Heart left ventricle (tissue), 16 donors: ENCODE measurements at regions of chr10 and their contacts with region 1.

Region 1: GRCh38 chr10:70903262-70903921 is 15.0 kb upstream of the PCBD1 start:
- DNase-seq: peak in 4 of 5 donors; percentile 68 to 79 (median 70)
- ATAC-seq: peak; percentile 61 to 72 (median 64)
- H3K4me3 ChIP-seq: no peak overlapping the region
- H3K27ac ChIP-seq: no peak overlapping the region
- H3K4me1 ChIP-seq: peaks cover 0 to 24% (median 9%) of the 10 kb centered on the region in 12 donors
- H3K27me3 ChIP-seq: no peaks in the 10 kb centered on the region
- CTCF ChIP-seq: peak; percentile 84 to 95 (median 91)
- POLR2A ChIP-seq: no peak

Region 2: DNA sequence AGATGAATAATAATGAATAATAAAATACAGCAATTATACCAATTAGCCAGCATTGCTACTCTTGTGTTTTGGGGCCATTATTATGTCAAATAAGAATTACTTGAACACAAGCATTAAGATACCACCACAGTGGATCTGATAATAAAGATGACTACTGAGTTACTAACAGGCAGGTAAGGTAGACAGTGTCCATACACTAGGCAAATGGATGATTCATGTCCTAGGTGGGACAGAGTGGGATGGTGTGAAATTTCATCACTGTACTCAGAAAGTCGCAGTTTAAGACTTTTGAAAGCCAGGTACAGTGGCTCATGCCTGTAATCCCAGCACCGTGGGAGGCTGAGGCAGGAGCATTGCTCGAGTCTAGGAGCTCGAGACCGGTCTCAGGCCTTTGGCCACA is 300.3 kb after region 1 on chr10:
- intact Hi-C with region 1: loop called in 2 of 10 experiments (anchors 5 kb)
- DNase-seq: no peak
- ATAC-seq: no peak
- H3K4me3 ChIP-seq: no peak overlapping the region
- H3K27ac ChIP-seq: no peak overlapping the region
- H3K4me1 ChIP-seq: peaks cover 0 to 13% (median 2%) of the 10 kb centered on the region in 12 donors
- H3K27me3 ChIP-seq: no peaks in the 10 kb centered on the region
- CTCF ChIP-seq: no peak
- POLR2A ChIP-seq: no peak